Dorsolateral prefrontal cortex (tissue), 120 donors: ENCODE measurements at regions of chr12 and their contacts with region 1.

Region 1: DNA sequence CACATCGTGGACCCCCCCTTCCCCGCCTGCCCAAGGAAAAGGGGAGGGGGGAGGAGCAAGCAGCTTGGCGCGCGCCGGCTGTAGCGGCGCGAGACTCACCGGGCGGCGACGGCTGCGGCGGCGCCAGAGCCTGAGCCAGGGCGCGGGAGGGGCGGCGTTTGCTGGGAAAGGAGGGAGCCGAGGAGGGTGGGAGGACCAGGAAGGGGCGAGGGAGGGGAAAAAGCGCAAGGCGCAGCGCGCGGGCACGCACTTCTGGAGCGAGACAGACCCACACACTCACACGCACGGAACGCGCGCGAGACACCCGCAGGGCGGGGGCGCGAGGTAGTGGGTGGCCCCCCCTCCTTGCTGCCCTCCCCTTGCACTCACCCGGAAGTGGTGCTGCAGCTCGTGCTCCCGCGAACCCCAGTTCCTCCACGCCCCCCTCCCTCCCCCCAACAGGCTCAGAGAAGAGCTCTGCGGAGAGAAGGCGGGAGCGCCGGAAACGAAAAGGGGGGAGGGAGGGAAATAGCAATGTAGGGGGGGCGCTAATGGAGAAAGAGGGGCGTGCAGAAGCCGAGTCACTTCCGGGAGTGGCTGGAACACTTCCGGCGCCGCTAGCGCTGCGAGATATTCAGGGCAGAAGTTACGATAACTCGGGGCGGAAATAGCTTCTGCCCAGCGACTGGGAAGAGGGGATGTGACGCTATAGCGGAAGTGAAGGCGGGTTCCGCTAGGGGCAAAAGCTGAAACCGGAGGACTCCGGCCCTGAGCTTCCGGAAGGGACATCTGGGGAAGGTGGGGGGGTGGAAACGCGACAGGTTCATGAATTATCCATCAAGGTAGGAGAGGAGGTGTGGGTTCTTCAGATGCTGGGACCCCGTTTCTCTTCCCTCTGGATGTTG is at the start of gene ZNF384:
- DNase-seq: peak; percentile 98 to 100 (median 99)
- H3K4me3 ChIP-seq: peak within 1 kb of the TSS; percentile 64 to 97 (median 88)
- H3K27ac ChIP-seq: peak within 1 kb of the TSS; percentile 74 to 100 (median 98)
- H3K27me3 ChIP-seq: no peaks in the 10 kb centered on the region
- CTCF ChIP-seq: peak in 40 of 56 donors; percentile 7 to 63 (median 36)
- total RNA-seq, gene ZNF384: 37.7 to 73.6 (median 53.6) TPM

Region 2: GRCh38 chr12:6563448-6564050 is 125.7 kb before region 1 on chr12:
- intact Hi-C with region 1: loop called in 1 of 2 experiments (anchors 5 kb)
- DNase-seq: peak in 6 of 10 donors; percentile 37 to 66 (median 56)
- H3K4me3 ChIP-seq: no peak overlapping the region
- H3K27ac ChIP-seq: no peak overlapping the region
- H3K27me3 ChIP-seq: no peaks in the 10 kb centered on the region
- CTCF ChIP-seq: peak; percentile 36 to 82 (median 72)

Region 3: DNA sequence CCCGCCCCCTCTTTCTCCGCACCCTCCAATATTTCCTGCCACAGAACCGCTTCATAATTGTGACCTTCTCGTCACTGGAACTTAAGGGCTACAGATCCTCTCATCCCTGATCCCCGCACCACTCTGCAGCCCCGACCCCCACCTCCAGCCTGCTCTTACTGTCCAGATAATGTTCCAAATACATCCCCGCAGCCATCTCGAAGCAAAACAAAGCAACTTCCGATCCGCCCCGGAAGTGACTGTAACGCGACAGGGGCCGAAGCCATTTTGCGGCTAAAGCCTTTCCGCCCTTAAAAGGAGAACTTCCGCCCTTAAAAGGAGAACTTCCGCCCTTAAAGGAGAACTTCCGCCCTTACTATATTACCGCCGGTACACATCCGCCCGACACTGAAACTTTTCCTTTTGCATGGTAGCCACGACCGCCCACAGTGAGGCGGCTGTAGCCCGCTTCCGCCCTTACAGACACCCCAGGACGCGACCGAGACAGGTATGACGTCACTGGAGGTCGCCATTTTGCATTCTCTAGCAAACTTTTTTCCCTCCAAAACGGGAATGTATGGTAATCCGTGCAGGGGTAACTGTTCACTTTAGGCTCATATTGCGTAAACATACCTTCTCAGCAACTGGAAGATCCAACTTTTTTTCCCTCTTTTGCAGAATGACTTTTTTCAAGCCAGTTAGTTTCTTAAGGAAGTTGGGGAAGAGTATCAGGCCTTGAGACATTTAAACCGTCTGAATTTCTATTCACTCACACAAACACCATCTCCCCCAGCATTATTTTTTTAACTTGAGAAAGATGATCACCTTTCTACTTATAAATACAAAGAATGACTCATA is 26.1 kb before region 1 on chr12 and contains the start of gene ING4:
- intact Hi-C with region 1: loop called (anchors 1 kb)
- DNase-seq: peak; percentile 96 to 100 (median 99)
- H3K4me3 ChIP-seq: peak within 1 kb of the TSS; percentile 58 to 95 (median 80)
- H3K27ac ChIP-seq: peak within 1 kb of the TSS in 58 of 59 donors; percentile 25 to 96 (median 82)
- H3K27me3 ChIP-seq: no peaks in the 10 kb centered on the region
- CTCF ChIP-seq: peak in 18 of 56 donors; percentile 3 to 51 (median 14)
- total RNA-seq, gene ING4: 45.0 to 72.1 (median 59.4) TPM

Region 4: DNA sequence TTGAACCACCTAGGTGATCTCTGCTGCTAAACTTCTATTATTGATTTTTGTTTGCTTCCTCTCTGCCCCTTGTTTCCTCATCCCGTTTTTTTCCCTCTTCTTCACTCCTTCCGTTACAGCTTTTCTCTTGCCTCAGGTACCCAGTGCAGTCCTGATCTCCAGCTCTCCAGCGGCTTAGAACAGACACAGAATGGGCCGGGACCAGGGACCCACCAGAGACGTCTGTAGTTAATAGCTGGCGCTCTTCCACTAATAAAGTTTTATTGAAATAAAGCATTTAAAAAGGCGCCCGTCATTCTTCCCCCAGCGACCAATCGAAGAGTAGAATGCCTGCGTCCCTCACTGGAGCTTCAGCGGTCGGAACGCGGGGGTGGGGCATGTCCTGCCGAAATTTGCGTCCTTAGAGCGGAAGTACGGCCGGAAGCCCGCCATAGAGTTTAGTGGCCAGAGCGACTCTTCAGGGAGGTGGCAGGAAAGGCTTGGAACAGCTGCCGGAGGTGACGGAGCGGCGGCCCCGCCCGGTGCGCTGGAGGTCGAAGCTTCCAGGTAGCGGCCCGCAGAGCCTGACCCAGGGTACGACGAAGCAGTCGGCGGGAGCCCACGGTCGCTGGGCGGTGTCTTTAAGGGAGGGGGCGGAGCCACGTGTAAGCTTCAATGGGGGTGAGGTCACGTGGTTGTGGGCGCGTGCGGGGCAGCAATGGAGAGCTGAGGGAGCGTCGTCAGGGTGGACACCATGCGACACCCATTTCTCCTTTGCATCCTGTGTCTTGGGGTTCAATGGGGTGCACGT is 34.6 kb after region 1 on chr12 and contains the start of gene COPS7A:
- intact Hi-C with region 1: loop called (anchors 1 kb)
- DNase-seq: peak; percentile 98 to 100 (median 99)
- H3K4me3 ChIP-seq: peak within 1 kb of the TSS; percentile 61 to 94 (median 82)
- H3K27ac ChIP-seq: peak within 1 kb of the TSS; percentile 53 to 97 (median 87)
- H3K27me3 ChIP-seq: no peaks in the 10 kb centered on the region
- CTCF ChIP-seq: peak in 40 of 56 donors; percentile 4 to 63 (median 28)
- total RNA-seq, gene COPS7A: 52.6 to 143 (median 103) TPM

Region 5: DNA sequence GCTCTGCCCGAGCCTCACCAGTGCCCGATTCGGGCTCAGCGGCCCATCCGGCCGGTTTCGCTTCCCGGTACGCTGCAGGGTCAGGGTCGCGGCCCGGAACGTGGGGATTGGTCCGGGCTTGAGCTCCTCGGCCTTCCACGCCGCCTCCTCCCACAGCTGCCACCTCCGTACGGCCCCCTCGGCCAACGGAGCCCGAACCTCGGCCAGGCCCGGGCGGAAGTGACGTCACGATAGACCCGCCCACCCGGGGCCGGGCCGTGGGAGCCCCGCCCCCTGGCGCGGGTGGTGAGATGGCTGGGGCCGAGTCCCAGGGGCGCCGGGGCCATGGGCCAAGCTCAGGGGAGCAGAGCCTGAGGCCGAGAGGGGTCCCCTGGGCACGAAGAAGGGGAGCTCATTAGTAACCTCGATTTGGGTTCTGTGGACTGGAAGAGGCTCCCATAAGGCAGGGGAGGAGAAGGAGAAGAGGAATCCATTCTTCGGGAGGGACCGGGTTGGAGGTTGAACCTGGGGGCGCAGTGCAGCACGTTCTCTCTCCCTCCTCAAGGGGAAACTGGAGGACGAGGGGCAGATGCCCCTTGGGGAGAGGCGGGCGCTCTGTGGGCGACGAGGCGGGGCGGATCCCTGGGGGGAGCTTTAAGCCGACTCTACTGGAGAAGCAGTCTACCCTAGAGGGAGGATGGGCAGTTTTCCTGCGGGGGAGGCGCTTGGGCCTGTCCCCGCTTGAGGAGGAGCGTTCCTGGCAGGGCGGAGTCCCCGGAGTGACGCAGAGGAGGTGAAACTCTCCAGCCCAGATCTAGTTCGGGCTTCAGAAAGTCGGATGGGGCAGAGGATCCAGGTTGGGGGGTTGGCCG is 63.9 kb after region 1 on chr12 and contains the start of gene MLF2:
- intact Hi-C with region 1: no loop called
- DNase-seq: peak; percentile 96 to 99 (median 98)
- H3K4me3 ChIP-seq: peak within 1 kb of the TSS; percentile 69 to 100 (median 97)
- H3K27ac ChIP-seq: peak within 1 kb of the TSS; percentile 68 to 100 (median 98)
- H3K27me3 ChIP-seq: no peaks in the 10 kb centered on the region
- CTCF ChIP-seq: peak in 29 of 56 donors; percentile 91 to 98 (median 96)
- total RNA-seq, gene MLF2: 139 to 384 (median 261) TPM

Region 6: DNA sequence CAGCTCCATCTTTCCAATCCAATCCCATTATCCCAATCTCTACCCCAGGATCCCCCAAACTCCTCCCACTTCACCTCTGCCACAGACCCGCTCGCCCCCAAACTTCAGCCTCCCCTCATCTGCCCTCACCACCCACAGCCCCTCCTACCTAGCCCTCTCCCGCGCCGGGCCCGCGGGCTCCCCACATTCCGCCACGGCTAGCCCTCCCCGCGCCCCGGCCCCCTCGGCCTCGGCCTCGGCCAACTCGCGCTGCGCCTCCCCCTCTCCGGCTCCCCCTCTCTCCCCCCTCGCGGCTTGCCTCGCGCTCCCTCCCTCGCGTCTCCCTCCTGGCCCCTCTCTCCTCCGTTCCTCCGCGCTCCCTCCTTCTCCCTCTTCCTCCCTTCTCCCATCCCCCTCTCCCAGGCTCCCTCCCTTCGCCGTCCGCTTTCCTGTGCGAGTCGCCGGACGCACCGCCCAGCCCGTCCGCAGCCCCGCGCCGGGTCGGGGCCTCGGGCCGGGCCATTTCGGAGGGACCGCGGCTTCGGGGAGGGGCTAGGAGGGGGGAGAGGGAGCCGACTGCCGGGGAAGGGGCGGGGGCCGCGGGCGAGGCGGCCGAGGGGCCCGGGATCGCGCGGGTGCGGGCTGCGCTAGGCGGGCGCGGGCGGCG is 238.3 kb after region 1 on chr12 and contains the start of gene ATN1:
- intact Hi-C with region 1: no loop called
- DNase-seq: peak in 9 of 10 donors; percentile 55 to 86 (median 79)
- H3K4me3 ChIP-seq: peak within 1 kb of the TSS; percentile 58 to 89 (median 78)
- H3K27ac ChIP-seq: peak within 1 kb of the TSS; percentile 82 to 98 (median 95)
- H3K27me3 ChIP-seq: no peaks in the 10 kb centered on the region
- CTCF ChIP-seq: peak in 1 of 56 donors; percentile 24
- total RNA-seq, gene ATN1: 147 to 334 (median 199) TPM